Gastrocnemius medialis (tissue), 4 donors: ENCODE measurements at regions of chr11 and their contacts with region 1.

Region 1: GRCh38 chr11:43880640-43881159 is at the start of gene ALKBH3:
- DNase-seq: peak; percentile 89 to 90
- ATAC-seq: peak; percentile 99
- H3K4me3 ChIP-seq: peak within 1 kb of the TSS; percentile 70 to 97 (median 92)
- H3K27ac ChIP-seq: peak within 1 kb of the TSS; percentile 66 to 84 (median 70)
- H3K4me1 ChIP-seq: peaks cover 18 to 21% of the 10 kb centered on the region in 2 donors
- H3K27me3 ChIP-seq: peaks cover 0 to 3% (median 0%) of the 10 kb centered on the region in 3 donors
- CTCF ChIP-seq: peak in 2 of 5 experiments; percentile 16
- POLR2A ChIP-seq: peak; percentile 19 to 26
- total RNA-seq, gene ALKBH3: 27.5 to 44.1 (median 42.0) TPM

Region 2: DNA sequence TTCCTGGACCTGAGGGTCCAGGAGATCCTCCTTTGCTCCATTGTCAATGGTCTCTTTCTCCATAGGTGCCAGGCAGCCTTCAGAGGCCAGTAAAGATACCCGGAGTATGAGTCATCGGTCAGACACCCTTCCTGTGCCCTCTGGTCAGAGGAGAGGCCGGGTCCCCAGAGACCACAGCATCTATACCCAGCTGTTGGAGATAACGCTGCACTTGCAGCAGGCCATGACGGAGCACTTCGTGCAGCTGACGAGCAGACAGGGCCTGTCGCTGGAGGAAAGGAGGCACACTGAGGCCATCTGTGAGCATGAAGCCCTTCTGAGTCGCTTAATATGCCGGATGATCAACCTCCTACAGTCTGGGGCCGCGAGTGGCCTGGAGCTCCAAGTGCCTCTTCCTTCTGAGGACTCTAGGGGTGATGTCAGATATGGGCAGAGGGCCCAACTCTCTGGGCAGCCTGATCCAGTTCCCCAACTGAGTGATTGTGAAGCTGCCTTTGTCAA is 167.3 kb after region 1 on chr11 and contains the start of gene ACCSL:
- in situ Hi-C with region 1: loop called in 1 of 4 experiments (anchors 5 kb)
- intact Hi-C with region 1: no loop called
- DNase-seq: no peak
- ATAC-seq: no peak
- H3K4me3 ChIP-seq: no peak within 1 kb of the TSS
- H3K27ac ChIP-seq: no peak within 1 kb of the TSS
- H3K4me1 ChIP-seq: no peaks in the 10 kb centered on the region
- H3K27me3 ChIP-seq: no peaks in the 10 kb centered on the region
- CTCF ChIP-seq: no peak
- POLR2A ChIP-seq: no peak
- total RNA-seq, gene ACCSL: not detected